PC-9 (cell line): ENCODE measurements at regions of chr13 and their contacts with region 1.

Region 1: DNA sequence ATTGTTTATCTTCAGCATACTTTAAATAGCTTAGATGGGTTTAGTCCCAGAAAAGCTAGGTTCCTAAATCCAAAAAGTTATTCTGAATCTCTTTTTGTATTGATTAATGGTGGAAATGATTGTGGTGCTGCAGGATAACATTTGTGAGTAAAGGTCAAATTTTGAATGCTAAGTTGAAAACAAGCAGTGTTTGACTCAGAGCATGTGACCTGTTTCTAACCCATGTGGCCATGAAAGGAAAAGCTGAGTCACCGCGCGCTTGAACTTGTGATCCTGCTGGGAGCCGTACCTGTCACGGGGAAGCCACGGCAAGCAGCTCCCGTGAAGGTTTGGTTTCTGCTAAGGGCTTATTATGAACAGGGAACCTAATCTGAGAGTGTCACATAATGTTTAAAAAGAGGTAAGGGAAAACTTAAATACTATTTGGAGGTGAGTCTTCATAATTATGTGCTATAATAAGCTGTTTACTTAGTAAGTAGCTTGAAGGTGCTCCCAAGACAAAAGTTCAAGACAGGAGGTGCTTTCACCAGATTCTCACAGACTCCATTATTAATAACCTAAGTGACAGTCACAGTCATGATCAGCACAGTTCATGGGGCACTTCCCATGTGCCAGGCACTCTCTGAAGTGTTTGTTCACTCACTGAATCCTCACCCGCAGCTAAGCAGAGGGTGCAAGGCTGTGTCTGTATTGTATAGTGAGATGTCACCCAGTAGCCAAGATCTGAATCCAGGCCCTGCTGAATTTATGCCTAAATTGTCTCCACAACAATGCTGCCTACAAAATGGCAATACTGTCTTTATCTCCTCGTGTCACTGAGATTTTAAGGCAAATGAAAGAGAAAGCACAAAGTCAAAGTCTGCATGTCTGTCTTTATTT is 286.5 kb downstream of the MYO16 start:
- DNase-seq: peak; percentile 81 to 96
- H3K4me3 ChIP-seq: peak overlapping the region; percentile 47
- H3K27ac ChIP-seq: peak overlapping the region; percentile 96
- H3K4me1 ChIP-seq: peaks cover 56% of the 10 kb centered on the region
- H3K27me3 ChIP-seq: no peaks in the 10 kb centered on the region
- CTCF ChIP-seq: no peak

Region 2: DNA sequence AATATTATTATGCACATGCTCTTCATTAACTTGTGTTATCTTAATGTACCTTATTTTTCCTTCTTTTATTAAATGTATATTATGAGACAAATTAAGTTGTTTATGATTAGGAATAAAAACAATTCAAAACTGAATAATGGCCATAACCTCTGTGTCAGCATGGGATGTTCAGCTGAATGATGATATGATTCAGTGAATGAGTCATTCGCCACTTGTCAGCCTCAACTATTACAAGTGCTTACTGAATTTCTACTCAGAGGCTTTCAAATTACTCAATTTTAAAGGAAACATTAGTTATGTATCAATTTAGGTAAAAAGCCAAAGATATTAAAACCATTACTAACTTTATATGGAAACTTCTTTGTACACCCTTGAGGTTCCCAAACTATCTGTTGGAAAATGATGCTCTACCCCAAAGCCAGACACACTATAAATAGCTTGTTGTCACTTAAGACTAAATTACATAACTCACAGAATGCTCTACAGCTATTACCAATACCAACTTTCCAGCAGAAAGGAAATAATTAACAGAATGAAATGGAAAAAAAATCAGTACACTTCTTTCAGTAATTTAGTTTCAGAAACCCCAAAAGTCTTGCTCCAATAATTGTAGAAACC is 715.0 kb before region 1 on chr13:
- CTCF ChIA-PET with region 1: no interaction called
- POLR2A ChIA-PET with region 1: no interaction called
- intact Hi-C with region 1: no loop called
- DNase-seq: no peak
- H3K4me3 ChIP-seq: no peak overlapping the region
- H3K27ac ChIP-seq: no peak overlapping the region
- H3K4me1 ChIP-seq: no peaks in the 10 kb centered on the region
- H3K27me3 ChIP-seq: no peaks in the 10 kb centered on the region
- CTCF ChIP-seq: no peak

Region 3: GRCh38 chr13:108961542-108962125 is 45.8 kb after region 1 on chr13:
- CTCF ChIA-PET with region 1: no interaction called
- POLR2A ChIA-PET with region 1: no interaction called
- intact Hi-C with region 1: loop called (anchors 1 kb)
- DNase-seq: peak in 1 of 2 experiments; percentile 63
- H3K4me3 ChIP-seq: no peak overlapping the region
- H3K27ac ChIP-seq: peak overlapping the region; percentile 25
- H3K4me1 ChIP-seq: peaks cover 46% of the 10 kb centered on the region
- H3K27me3 ChIP-seq: no peaks in the 10 kb centered on the region
- CTCF ChIP-seq: peak; percentile 98

Region 4: DNA sequence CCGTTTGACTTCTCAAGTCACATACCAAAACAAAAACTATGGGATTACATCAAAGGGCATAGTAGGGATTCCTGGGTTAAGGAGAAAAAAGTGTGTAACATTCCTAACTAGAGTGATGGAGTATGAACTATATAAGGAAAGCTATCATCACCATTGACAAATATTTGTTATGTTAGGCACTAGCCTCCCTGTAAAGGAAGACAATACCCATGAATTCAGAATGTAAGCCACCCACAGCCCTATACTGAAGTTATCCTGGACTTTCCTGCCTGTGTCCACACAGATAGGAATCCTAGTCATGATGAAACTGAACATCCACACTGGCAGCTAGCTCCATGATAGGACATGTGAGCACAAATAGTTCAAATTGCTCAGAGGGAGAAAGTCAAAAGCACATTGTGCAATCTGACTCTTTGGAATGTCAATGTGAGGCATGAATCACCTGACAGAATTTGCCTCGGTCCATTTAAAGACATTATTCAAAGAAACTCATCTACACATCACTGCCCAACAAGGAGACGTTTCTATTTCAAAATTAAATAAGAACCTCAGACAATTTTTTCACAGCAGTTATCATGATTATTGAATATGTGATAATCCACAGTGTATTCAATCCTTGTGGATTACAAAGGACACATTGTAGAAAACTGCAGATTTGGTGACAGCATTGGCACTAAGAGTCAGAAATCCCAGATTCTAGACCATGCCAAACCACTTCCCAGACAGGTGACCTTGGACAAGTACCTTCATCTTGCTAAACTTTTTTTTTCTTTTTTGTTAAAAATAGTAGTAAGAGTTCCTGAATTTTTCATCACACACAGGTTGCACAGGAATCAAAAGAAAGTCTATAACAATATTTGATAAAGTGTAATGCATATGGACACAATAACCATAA is 341.2 kb after region 1 on chr13:
- CTCF ChIA-PET with region 1: no interaction called
- POLR2A ChIA-PET with region 1: interaction called, 17 read pairs
- intact Hi-C with region 1: no loop called
- DNase-seq: peak; percentile 63 to 100
- H3K4me3 ChIP-seq: peak overlapping the region; percentile 10; the same call in 1 of the 2 replicates
- H3K27ac ChIP-seq: peak overlapping the region; percentile 97
- H3K4me1 ChIP-seq: peaks cover 57% of the 10 kb centered on the region
- H3K27me3 ChIP-seq: no peaks in the 10 kb centered on the region
- CTCF ChIP-seq: no peak

Region 5: GRCh38 chr13:109862627-109863026 is 946.8 kb after region 1 on chr13:
- CTCF ChIA-PET with region 1: interaction called, 3 read pairs
- POLR2A ChIA-PET with region 1: no interaction called
- intact Hi-C with region 1: loop called (anchors 2 kb)
- DNase-seq: peak in 1 of 2 experiments; percentile 98
- H3K4me3 ChIP-seq: peak overlapping the region; percentile 23; the same call in 1 of the 2 replicates
- H3K27ac ChIP-seq: peak overlapping the region; percentile 81
- H3K4me1 ChIP-seq: peaks cover 79% of the 10 kb centered on the region
- H3K27me3 ChIP-seq: no peaks in the 10 kb centered on the region
- CTCF ChIP-seq: no peak

Region 6: DNA sequence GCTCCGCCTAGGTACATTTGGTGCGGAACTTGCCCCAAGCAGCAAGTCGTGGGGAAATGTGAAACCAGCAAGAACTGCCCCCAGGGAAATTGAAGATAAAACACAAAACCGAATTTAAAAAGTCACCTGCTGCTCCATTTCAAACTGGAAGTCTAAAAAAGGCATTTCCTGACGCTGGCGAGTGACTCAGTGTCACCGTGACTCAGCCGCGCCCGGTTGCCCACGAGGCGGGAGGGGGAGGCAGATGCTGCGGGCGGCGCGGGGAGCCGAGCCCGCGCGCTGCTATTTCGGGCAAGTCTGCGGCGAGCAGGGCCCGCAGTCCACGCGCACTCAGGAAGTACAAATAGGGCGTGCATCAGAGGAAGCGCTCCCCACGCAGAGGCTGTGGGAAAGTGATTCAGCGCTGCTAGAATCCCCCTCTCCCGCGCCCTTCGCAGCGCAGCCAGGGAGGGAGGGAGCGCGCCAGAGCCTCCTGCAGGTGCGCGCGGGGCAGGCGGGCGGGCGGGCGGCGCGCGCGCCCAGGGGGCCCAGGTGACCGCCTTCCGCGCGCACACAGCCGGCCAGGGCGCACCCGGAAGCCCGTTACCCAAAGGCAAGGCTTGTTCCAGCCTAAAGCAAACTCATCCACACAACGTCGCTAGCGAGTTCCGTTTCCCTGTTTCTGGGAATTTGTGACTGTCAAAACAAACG is 1222.3 kb after region 1 on chr13:
- CTCF ChIA-PET with region 1: interaction called, 3 read pairs
- POLR2A ChIA-PET with region 1: no interaction called
- intact Hi-C with region 1: loop called (anchors 1 kb)
- DNase-seq: peak; percentile 82 to 94
- H3K4me3 ChIP-seq: peak overlapping the region; percentile 67
- H3K27ac ChIP-seq: peak overlapping the region; percentile 95
- H3K4me1 ChIP-seq: peaks cover 42% of the 10 kb centered on the region
- H3K27me3 ChIP-seq: no peaks in the 10 kb centered on the region
- CTCF ChIP-seq: peak; percentile 42; the same call in 1 of the 2 replicates